GM12878 (cell line): ENCODE measurements at regions of chr7 and their contacts with region 1.

Region 1: GRCh38 chr7:5704534-5704922 is 76.9 kb downstream of the RNF216 start:
- DNase-seq: no peak
- ATAC-seq: peak; percentile 13; the same call in 2 of the 3 replicates
- H3K4me3 ChIP-seq: no peak overlapping the region
- H3K27ac ChIP-seq: peak overlapping the region; percentile 59; the same call in 1 of the 2 replicates
- H3K4me1 ChIP-seq: peaks cover 58% of the 10 kb centered on the region
- H3K27me3 ChIP-seq: no peaks in the 10 kb centered on the region
- CTCF ChIP-seq: peak; percentile 87 to 96 (median 95); a peak in 5 of 6 replicates
- EP300 ChIP-seq: no peak
- POLR2A ChIP-seq: no peak
- RAD21 ChIP-seq: peak; percentile 95

Region 2: DNA sequence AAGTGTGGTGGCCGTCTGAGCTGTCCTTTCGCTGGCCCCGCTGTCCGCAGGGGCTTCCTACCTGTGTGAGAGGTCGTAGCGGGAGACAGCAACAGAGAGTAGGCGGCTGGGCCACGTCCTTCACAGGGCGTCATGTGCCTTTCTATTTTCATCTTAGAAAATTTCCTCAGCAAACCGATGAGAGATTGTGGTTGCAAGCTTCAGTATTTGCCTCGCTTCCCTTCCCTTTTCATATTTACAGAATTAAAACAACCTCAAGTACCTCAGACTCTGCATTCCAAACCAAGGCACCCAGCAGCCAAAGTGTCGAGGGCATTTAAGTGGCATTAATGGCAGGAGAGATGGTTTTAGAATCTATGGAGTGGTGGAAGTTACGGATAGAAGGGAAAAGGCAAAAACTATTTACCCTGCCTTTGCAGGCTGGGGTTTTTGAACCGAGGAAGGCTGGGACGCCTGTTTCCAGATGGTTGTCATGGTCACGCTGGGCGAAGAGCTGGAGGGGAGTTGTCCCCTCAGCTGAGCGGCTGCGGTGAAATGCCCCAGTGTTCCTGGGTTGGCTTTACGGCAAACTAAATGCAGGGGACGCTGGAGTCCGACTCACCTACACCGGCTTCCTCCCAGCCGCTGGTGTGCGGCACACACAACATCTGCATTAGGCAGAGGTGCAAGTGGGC is 472.6 kb before region 1 on chr7:
- CTCF ChIA-PET with region 1: no interaction called
- POLR2A ChIA-PET with region 1: no interaction called
- RAD21 ChIA-PET with region 1: interaction called, 4 read pairs
- SMC1A ChIA-PET with region 1: no interaction called
- in situ Hi-C with region 1: loop called (anchors 5 kb)
- intact Hi-C with region 1: loop called (anchors 5 kb)
- DNase-seq: peak; percentile 93
- ATAC-seq: peak; percentile 77
- H3K4me3 ChIP-seq: peak overlapping the region; percentile 35
- H3K27ac ChIP-seq: peak overlapping the region; percentile 99
- H3K4me1 ChIP-seq: peaks cover 68% of the 10 kb centered on the region
- H3K27me3 ChIP-seq: no peaks in the 10 kb centered on the region
- CTCF ChIP-seq: peak in 1 of 3 experiments; percentile 46; a peak in 1 of 6 replicates
- EP300 ChIP-seq: peak; percentile 94 to 97
- POLR2A ChIP-seq: peak; percentile 46; the same call in 1 of the 2 replicates
- RAD21 ChIP-seq: no peak

Region 3: GRCh38 chr7:5406957-5407945 is 297.3 kb before region 1 on chr7:
- CTCF ChIA-PET with region 1: no interaction called
- POLR2A ChIA-PET with region 1: interaction called, 12 read pairs
- RAD21 ChIA-PET with region 1: no interaction called
- SMC1A ChIA-PET with region 1: no interaction called
- in situ Hi-C with region 1: no loop called
- intact Hi-C with region 1: no loop called
- DNase-seq: no peak
- ATAC-seq: no peak
- H3K4me3 ChIP-seq: no peak overlapping the region
- H3K27ac ChIP-seq: no peak overlapping the region
- H3K4me1 ChIP-seq: no peaks in the 10 kb centered on the region
- H3K27me3 ChIP-seq: 0 out of 4 replicates have a peak, but pooled peaks cover 0 to 2% of the 10 kb centered on the region in 2 experiments
- CTCF ChIP-seq: no peak
- EP300 ChIP-seq: no peak
- POLR2A ChIP-seq: no peak
- RAD21 ChIP-seq: no peak

Region 4: GRCh38 chr7:5557920-5558401 is 146.6 kb before region 1 on chr7:
- CTCF ChIA-PET with region 1: no interaction called
- POLR2A ChIA-PET with region 1: interaction called, 8 read pairs
- RAD21 ChIA-PET with region 1: no interaction called
- SMC1A ChIA-PET with region 1: no interaction called
- in situ Hi-C with region 1: no loop called
- intact Hi-C with region 1: loop called (anchors 1 kb)
- DNase-seq: peak; percentile 67
- ATAC-seq: peak; percentile 57
- H3K4me3 ChIP-seq: peak overlapping the region; percentile 71
- H3K27ac ChIP-seq: peak overlapping the region; percentile 98
- H3K4me1 ChIP-seq: peaks cover 39% of the 10 kb centered on the region
- H3K27me3 ChIP-seq: no peaks in the 10 kb centered on the region
- CTCF ChIP-seq: no peak
- EP300 ChIP-seq: no peak
- POLR2A ChIP-seq: peak; percentile 65
- RAD21 ChIP-seq: no peak

Region 5: DNA sequence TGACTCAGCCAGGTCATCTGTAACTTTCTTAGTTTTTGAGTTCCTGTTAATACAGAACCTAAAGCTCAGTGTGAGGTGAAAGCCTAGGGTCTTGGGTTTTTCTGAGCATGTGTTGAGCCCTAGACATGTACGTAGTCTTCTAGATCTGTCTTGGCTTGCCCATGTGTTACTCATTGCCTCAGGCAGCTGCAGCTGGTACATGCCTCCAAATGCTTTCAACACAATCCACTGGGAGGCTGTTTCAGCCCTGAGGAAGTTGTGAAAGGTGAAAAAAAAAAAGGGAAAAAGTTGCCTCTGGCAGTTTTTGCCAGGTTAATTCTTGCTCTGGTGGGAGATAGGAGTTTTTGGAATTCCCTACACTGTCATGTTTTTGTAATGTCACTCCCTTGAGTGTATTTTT is 57.7 kb before region 1 on chr7:
- CTCF ChIA-PET with region 1: interaction called, 4 read pairs
- POLR2A ChIA-PET with region 1: no interaction called
- RAD21 ChIA-PET with region 1: no interaction called
- SMC1A ChIA-PET with region 1: interaction called, 10 read pairs
- in situ Hi-C with region 1: no loop called
- intact Hi-C with region 1: no loop called
- DNase-seq: no peak
- ATAC-seq: no peak
- H3K4me3 ChIP-seq: no peak overlapping the region
- H3K27ac ChIP-seq: no peak overlapping the region
- H3K4me1 ChIP-seq: no peaks in the 10 kb centered on the region
- H3K27me3 ChIP-seq: no peaks in the 10 kb centered on the region
- CTCF ChIP-seq: no peak
- EP300 ChIP-seq: no peak
- POLR2A ChIP-seq: no peak
- RAD21 ChIP-seq: no peak

Region 6: GRCh38 chr7:5677538-5678294 is 26.8 kb before region 1 on chr7:
- CTCF ChIA-PET with region 1: interaction called, 407 read pairs
- POLR2A ChIA-PET with region 1: interaction called, 4 read pairs
- RAD21 ChIA-PET with region 1: interaction called, 124 read pairs
- SMC1A ChIA-PET with region 1: interaction called, 128 read pairs
- in situ Hi-C with region 1: no loop called
- intact Hi-C with region 1: loop called (anchors 2 kb)
- DNase-seq: no peak
- ATAC-seq: peak; percentile 81
- H3K4me3 ChIP-seq: no peak overlapping the region
- H3K27ac ChIP-seq: peak overlapping the region; percentile 10
- H3K4me1 ChIP-seq: peaks cover 50% of the 10 kb centered on the region
- H3K27me3 ChIP-seq: no peaks in the 10 kb centered on the region
- CTCF ChIP-seq: peak; percentile 68 to 74 (median 69)
- EP300 ChIP-seq: no peak
- POLR2A ChIP-seq: no peak
- RAD21 ChIP-seq: peak; percentile 77